ENCODE measurements at regions of chr5 and their contacts with region 1.

Region 1: DNA sequence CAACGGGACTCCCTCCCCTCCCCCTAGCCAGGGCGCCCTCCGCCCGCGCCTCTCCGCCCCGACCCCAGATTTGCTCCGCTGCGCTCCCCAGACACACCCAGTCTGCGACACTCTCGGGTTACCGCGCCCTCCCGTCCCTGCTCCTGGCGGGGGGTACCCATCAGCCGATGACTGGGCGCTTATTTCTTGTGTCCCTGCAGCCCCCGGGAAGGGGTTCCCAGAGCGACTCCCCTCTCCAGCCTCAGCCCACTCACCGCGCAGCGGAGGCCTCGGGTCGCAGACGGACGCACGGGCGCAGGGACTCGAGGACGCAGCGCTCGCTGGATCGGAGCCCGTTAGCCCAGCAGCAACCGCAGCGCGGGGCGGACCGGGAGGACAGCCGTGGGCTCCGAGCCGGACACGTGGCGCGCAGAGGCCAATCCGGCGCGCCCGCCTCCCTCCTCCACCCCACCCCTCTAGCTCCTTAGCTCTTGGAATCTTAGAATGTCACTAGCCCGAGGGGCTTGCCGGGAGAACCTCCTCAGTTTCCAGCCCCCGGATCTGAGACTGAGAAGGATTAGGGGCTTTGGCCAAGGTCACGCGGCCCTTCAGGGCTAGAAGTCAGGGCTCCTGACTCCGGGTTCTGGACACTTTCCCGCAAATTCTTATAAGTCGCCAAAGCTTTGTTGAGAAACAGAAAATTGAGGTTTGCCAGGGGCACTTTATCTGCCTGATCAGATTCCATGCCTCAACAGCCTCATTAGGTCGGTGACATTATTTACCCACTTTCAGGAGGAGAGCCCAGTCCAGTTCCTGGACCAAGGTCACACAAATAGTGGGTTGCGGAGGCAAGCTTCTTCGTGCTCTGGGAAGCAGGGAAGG is at the start of gene ANXA6:
- DNase-seq: peak; percentile 96
- ATAC-seq: peak; percentile 99
- total RNA-seq, gene ANXA6: 222 TPM

Region 2: DNA sequence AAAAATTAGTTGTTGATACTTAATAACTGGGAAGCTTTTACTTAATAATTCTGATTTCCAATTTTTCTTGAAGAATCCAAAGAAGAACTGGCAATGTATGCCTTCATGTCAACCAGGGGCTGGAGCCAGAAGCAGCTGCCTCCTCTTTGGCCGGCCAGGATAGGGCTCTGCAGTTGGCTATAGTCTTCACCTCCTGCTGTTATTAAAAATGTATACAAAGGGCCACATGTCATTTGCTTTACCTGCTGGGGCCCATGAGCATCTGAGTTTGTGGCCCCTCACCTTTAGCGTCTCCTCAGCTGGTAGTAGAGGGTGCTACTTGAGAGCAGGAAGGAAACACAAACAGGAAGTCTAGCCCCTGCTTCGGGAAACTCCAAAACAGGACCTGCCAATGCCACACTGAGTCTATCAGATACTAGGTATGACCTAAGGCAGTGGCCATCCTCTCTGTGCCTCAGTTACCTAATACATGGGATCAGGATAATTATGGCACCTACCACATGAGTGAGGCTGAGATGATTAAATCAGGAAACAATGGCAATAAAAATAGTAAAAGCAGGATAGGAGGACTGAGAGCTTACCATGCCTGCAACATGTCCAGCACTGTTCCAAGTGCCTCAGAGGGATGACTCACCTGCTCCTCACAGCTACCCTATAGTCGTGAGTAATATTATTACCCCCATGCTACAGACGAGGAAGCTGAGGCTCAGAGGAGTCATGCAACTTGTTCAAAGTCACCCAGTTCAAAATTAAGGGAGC is 44.9 kb after region 1 on chr5:
- intact Hi-C with region 1: no loop called
- DNase-seq: no peak
- ATAC-seq: peak; percentile 52

Region 3: DNA sequence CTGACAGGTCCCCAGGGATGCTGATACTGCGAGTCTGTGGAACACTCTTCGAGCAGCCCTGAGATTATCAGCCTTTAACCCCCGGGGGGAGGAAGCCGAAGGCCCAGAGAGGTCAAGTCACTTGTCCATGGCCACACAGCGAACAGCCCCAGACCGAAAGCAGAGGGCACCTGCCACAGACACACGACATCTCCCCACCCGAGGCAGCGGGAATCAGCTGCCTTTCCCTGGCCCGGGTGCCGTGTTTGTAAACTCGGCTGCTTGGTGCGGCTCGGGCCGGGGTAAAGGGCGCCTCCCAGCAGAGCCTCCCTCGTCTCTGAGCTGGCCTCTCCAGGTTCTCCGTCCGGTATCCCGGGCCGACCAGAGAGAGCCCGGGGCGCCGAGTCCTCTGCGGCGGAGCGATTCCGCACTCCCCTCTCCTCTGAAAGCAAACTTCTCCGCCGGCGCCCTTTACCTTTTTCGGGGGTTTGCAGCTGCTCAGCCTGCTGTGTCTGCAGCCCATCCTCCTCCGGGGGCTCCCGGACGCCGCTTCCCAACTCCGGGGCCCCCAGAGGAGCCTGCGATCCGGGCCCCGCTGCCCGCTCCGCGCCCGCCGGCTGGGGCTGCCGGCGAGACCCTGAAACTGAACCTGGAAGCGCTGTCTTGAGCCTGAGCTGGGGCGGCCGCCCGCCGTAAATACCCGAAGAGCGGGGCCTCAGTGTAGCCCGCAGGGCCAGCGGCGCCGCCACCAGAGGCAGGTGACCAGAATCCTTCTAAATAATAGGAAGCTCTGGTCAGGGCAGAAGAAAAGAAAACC is 66.0 kb after region 1 on chr5 and contains the start of gene CCDC69:
- intact Hi-C with region 1: loop called (anchors 5 kb)
- DNase-seq: peak; percentile 90
- ATAC-seq: peak; percentile 93
- total RNA-seq, gene CCDC69: 181 TPM

Measured in Right ventricle myocardium inferior (tissue), 1 donor.